ENCODE measurements at regions of chr22 and their contacts with region 1.

Region 1: GRCh38 chr22:50612528-50613221 is 12.1 kb downstream of the MAPK8IP2 start:
- DNase-seq: no peak
- ATAC-seq: peak in 3 of 4 donors; percentile 16 to 53 (median 33)
- H3K4me3 ChIP-seq: no peak overlapping the region
- H3K27ac ChIP-seq: peak overlapping the region in 1 of 3 donors; percentile 50
- H3K4me1 ChIP-seq: peaks cover 0 to 10% (median 4%) of the 10 kb centered on the region in 4 donors
- H3K27me3 ChIP-seq: no peaks in the 10 kb centered on the region
- CTCF ChIP-seq: no peak
- POLR2A ChIP-seq: no peak

Region 2: DNA sequence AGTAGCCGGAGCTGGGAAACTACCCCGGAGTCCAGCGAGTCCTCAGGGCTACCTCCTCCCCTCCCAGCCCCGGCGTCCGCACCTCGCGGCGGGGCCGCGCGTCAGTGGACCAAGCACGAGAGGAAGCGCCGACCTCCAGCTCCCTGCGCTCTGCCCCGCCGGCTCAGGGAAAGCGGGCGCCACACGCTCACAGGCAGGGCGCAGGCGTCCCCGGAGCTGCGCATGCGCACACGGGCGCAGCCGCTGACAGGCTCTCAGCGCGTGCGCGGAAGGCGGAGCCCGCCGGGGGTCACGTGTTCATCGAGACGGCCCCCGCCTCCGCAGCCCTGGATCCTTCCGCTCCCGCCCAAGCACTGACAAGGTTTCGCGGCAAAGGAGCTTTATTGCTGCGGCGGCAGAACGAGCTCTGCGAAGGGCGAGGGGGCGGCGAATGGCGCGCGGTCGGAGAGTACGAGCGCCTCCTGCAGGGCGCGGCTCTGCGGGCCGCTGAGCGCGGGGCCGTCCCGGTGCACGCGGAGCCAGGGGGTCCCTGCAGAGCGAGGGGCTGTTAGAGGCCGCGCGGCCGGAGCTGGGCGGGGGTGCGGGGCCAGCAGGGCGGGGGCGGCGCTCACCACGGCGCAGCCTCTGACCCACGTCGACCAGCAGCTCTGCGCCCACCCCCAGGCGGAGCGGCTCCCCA is 87.1 kb before region 1 on chr22 and contains the start of gene SCO2:
- intact Hi-C with region 1: loop called in 1 of 2 experiments (anchors 10 kb)
- DNase-seq: peak; percentile 97
- ATAC-seq: peak; percentile 38 to 64 (median 56)
- H3K4me3 ChIP-seq: peak within 1 kb of the TSS; percentile 66 to 74 (median 68)
- H3K27ac ChIP-seq: peak within 1 kb of the TSS; percentile 76 to 94 (median 87)
- H3K4me1 ChIP-seq: peaks cover 0 to 25% (median 12%) of the 10 kb centered on the region in 4 donors
- H3K27me3 ChIP-seq: no peaks in the 10 kb centered on the region
- CTCF ChIP-seq: peak; percentile 8 to 36 (median 29)
- POLR2A ChIP-seq: peak; percentile 92
- total RNA-seq, gene SCO2: 0.80 to 4.2 (median 2.5) TPM in 4 of 6 experiments, not detected in the others